ENCODE measurements at regions of chr1 and their contacts with region 1.

Region 1: GRCh38 chr1:9078015-9078750 is 8.7 kb upstream of the SLC2A5 start:
- DNase-seq: no peak

Region 2: DNA sequence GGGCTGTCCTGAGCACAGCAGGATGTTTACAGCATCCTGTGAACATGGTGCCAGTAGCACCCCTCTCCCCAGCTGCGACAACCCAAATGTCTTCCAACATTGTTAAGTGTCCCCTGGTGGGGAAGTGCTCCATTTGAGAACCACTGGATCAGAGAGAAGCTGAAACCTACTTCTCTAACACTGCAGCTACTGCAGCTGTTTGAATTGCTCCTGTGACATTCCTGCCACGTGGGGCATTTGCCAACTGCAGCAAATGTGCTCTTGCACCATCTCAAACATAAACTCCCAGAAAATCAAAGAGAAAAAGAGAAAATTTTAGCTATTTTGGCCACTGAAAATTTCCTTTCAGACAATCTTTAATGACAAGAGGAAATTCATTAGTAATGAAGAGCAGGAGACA is 19.7 kb before region 1 on chr1:
- intact Hi-C with region 1: loop called in 1 of 2 experiments (anchors 1 kb)
- DNase-seq: peak; percentile 26